ENCODE measurements at regions of chr12 and their contacts with region 1.

Region 1: GRCh38 chr12:120228291-120229070 is 27.6 kb upstream of the RPLP0 start:
- DNase-seq: peak; percentile 91
- ATAC-seq: peak; percentile 83
- H3K4me3 Mint-ChIP-seq: peak overlapping the region; percentile 40
- H3K27ac Mint-ChIP-seq: peak overlapping the region; percentile 85
- H3K4me1 Mint-ChIP-seq: peaks cover 90% of the 10 kb centered on the region
- H3K27me3 Mint-ChIP-seq: no peaks in the 10 kb centered on the region

Region 2: GRCh38 chr12:120181991-120182631 is 46.4 kb before region 1 on chr12:
- CTCF ChIA-PET with region 1: interaction called, 11 read pairs
- POLR2A ChIA-PET with region 1: no interaction called
- DNase-seq: no peak
- ATAC-seq: no peak
- H3K4me3 Mint-ChIP-seq: no peak overlapping the region
- H3K27ac Mint-ChIP-seq: peak overlapping the region; percentile 25
- H3K4me1 Mint-ChIP-seq: peaks cover 4% of the 10 kb centered on the region
- H3K27me3 Mint-ChIP-seq: no peaks in the 10 kb centered on the region

Region 3: DNA sequence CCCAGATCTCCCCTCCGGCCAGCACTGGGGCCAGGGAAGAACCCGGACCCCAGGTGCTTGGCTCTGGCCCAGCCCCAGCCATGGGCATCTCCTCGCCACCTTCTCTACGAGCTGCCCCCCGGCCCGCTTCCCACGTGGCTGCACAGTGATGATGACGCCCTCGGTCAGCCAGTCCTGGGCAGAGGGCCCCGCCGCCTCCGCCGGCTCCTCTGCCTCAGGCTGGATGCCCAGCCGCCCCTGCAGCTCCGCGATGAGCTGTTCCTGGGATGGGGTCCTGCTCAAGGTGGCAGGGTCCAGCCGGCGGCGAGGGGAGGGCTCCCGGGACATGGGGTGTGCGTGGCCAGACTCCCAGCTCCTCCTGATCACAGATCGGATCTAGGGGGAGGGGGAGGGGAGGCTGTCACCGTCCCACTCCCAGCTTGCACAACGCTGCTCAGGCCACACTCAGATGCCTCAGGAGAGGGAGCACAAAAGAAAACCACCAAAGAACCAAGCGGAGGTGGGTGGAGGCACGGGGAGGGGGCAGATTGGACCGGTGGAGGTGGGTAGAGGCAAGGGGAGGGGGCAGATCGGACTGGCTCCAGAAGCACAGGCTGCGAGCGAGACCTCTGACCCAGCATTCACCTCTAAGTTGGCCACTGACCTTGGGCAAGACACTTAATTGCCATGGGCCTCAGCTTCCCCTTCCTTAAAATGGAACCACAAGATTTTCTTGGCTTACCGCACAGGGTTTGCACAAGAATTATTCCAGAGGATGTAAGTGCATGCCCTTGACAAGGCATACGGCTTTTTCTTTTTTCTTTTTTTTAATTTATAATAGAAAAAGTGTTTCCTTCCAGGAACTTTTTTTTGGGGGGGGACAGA is 11.5 kb before region 1 on chr12:
- CTCF ChIA-PET with region 1: interaction called, 21 read pairs
- POLR2A ChIA-PET with region 1: interaction called, 3 read pairs
- DNase-seq: no peak
- ATAC-seq: no peak
- H3K4me3 Mint-ChIP-seq: no peak overlapping the region
- H3K27ac Mint-ChIP-seq: no peak overlapping the region
- H3K4me1 Mint-ChIP-seq: no peaks in the 10 kb centered on the region
- H3K27me3 Mint-ChIP-seq: no peaks in the 10 kb centered on the region

Region 4: DNA sequence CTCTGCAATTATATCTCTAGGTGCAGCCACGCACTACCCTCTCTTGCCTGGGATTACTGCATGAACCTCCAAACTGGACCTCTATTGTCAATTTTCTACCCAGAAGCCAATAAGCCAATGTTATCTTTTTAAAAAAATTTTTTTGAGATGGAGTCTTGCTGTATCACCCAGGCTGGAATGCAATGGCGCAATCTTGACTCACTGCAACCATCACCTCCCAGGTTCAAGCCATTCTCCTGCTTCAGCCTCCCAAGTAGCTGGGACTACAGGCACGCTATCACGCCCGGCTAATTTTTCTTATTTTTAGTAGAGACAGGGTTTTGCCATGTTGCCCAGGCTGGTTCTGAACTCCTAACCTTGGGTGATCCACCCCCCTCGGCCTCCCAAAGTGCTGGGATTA is 48.3 kb after region 1 on chr12:
- CTCF ChIA-PET with region 1: interaction called, 18 read pairs
- POLR2A ChIA-PET with region 1: no interaction called
- DNase-seq: no peak
- ATAC-seq: no peak
- H3K4me3 Mint-ChIP-seq: no peak overlapping the region
- H3K27ac Mint-ChIP-seq: no peak overlapping the region
- H3K4me1 Mint-ChIP-seq: no peaks in the 10 kb centered on the region
- H3K27me3 Mint-ChIP-seq: no peaks in the 10 kb centered on the region

Region 5: GRCh38 chr12:120301962-120302815 is 73.7 kb after region 1 on chr12 and contains the start of gene SIRT4:
- CTCF ChIA-PET with region 1: interaction called, 25 read pairs
- POLR2A ChIA-PET with region 1: no interaction called
- DNase-seq: peak; percentile 96
- ATAC-seq: peak; percentile 99
- H3K4me3 Mint-ChIP-seq: peak within 1 kb of the TSS; percentile 90
- H3K27ac Mint-ChIP-seq: peak within 1 kb of the TSS; percentile 78
- H3K4me1 Mint-ChIP-seq: peaks cover 9% of the 10 kb centered on the region
- H3K27me3 Mint-ChIP-seq: no peaks in the 10 kb centered on the region
- total RNA-seq, gene SIRT4: 1.2 to 1.4 TPM

Measured in activated CD8-positive, alpha-beta T cell treated with anti-CD3 and anti-CD28 coated beads, Interleukin-2, amount 10 ng/mL, durations not matched to agents 7 days and 5 days (primary cell).